Breast epithelium (tissue), 4 donors: ENCODE measurements at regions of chr13 and their contacts with region 1.

Region 1: DNA sequence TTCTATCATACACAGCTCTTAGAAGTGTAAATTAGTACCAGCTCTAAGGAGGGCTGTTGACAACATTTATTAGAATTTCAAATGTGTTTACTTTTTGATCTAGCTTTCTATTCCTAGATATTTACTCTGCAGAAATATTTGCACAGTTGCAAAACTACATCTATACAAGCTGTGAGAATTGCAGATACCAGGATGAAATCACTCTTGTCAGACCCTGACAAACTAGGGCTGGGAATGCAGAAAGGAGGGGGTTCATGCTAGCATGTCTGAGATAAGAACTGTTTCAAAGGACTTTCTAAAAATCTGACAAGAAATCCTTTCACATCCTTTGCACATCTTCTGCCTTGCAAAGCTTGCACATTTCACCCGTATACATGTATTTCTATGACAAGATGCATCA is 11.8 kb upstream of the PABPC3 start:
- DNase-seq: no peak
- H3K4me3 ChIP-seq: no peak overlapping the region
- H3K27ac ChIP-seq: no peak overlapping the region
- H3K4me1 ChIP-seq: no peaks in the 10 kb centered on the region
- H3K27me3 ChIP-seq: no peaks in the 10 kb centered on the region
- CTCF ChIP-seq: no peak
- POLR2A ChIP-seq: no peak

Region 2: DNA sequence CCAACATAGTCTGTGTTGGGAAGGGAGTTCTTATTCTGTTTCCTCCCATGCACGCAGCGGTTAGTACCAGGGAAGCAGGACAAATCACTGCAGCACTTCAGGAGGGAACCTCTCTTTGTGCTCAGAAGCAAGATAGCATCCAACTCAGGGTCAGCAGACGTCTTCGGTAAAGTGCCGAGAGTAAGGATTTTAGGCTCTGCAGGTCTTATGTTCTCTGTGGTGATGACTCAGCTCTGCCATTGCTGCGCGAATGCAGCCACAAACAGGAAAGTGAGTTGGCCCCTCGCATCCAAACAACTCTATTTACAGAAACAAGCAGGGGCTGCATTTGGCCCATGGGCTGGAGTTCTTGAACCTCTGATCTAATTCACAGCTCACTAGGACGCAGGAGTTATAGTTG is 1045.7 kb before region 1 on chr13:
- intact Hi-C with region 1: no loop called
- DNase-seq: no peak
- H3K4me3 ChIP-seq: peak overlapping the region in 1 of 3 donors; percentile 8
- H3K27ac ChIP-seq: peak overlapping the region; percentile 22 to 84
- H3K4me1 ChIP-seq: peaks cover 2 to 5% of the 10 kb centered on the region in 2 donors
- H3K27me3 ChIP-seq: no peaks in the 10 kb centered on the region
- CTCF ChIP-seq: no peak
- POLR2A ChIP-seq: no peak

Region 3: DNA sequence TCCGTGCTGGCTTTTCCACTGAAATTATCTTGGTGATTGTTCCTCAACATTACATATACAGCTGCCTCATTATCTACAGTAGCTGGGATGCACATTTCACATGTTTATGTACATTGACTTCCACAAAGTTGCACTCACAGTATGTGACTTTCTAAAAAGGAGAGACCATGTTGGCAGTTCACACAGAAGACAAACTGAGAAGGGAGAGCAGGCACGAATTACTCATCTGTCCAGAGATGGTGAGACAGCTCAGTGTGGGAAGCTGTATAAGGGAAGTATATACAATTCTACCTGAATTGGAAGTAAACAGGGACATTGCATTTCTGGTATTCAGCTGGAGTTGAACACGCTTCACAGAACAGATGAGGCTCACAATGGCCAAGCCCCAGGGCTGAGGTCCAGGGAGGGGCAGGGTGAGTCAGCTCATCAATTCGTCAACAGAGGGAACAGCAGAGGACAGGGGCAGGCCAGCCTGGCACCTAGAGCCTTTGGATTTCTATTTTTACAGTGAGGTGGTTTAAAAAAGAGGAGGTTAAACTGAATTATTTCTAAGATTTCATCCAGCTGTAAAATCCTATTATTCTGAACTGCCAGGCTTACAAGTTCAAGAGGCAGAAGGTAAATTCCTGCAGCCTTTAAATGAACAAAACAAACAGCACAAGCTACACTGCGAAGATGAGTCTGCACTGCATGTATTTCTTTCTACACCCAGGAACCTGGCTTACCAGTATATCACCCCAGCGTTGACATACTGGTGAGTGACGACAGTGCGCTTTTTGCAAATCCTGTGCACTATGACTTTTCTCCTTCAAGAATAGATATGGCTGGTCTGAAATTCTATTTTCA is 581.3 kb before region 1 on chr13:
- intact Hi-C with region 1: no loop called
- DNase-seq: peak in 1 of 2 donors; percentile 22
- H3K4me3 ChIP-seq: no peak overlapping the region
- H3K27ac ChIP-seq: no peak overlapping the region
- H3K4me1 ChIP-seq: no peaks in the 10 kb centered on the region
- H3K27me3 ChIP-seq: no peaks in the 10 kb centered on the region
- CTCF ChIP-seq: no peak
- POLR2A ChIP-seq: no peak

Region 4: DNA sequence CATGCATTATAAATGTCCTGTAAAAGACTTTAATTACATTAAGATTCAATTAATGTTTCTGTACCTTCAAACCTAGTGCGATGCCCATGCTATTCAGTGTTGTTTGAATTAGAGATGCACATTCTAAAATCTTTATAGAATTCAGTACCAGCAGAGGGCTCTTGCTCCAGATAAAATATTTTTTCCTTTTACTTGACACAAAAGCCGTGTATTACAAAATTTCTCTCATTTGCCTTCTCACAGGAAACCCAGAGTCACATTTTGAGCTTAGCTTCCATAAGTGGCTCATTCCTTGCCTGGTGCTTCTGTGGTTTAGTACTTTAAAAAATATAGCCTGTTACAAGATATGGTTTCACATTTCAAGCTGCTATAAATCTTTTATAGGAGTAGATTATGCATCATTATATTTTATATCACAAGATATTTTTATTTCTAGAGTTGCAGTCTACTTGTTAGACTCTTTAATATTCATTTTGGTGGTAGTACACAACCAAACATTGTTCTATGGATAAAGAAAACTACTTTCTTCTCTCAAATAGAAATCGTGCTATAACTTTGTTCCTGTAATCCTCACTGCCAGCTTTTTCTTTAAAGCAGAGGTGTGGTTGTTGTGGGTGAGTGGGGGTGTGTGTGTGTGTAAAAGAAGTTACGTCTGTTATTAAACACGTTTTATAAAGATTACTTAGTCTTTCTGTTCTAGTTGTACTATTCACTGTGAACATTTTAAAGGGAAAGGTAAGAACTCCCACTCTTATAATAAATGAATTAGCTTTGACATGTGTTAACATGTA is 218.7 kb before region 1 on chr13:
- intact Hi-C with region 1: loop called (anchors 5 kb)
- DNase-seq: no peak
- H3K4me3 ChIP-seq: no peak overlapping the region
- H3K27ac ChIP-seq: no peak overlapping the region
- H3K4me1 ChIP-seq: no peaks in the 10 kb centered on the region
- H3K27me3 ChIP-seq: no peaks in the 10 kb centered on the region
- CTCF ChIP-seq: no peak
- POLR2A ChIP-seq: no peak